ENCODE measurements at regions of chr4 and their contacts with region 1.

Region 1: GRCh38 chr4:163748449-163748848 is 254.0 kb downstream of the TMA16 start:
- DNase-seq: no peak
- ATAC-seq: no peak
- H3K4me3 Mint-ChIP-seq: no peak overlapping the region
- H3K27ac Mint-ChIP-seq: no peak overlapping the region
- H3K4me1 Mint-ChIP-seq: peaks cover 4% of the 10 kb centered on the region
- H3K27me3 Mint-ChIP-seq: no peaks in the 10 kb centered on the region
- CTCF ChIP-seq: no peak

Region 2: GRCh38 chr4:163694385-163694784 is 54.1 kb before region 1 on chr4:
- CTCF ChIA-PET with region 1: no interaction called
- POLR2A ChIA-PET with region 1: no interaction called
- intact Hi-C with region 1: loop called (anchors 2 kb)
- DNase-seq: no peak
- ATAC-seq: no peak
- H3K4me3 Mint-ChIP-seq: no peak overlapping the region
- H3K27ac Mint-ChIP-seq: no peak overlapping the region
- H3K4me1 Mint-ChIP-seq: no peaks in the 10 kb centered on the region
- H3K27me3 Mint-ChIP-seq: peaks cover 3% of the 10 kb centered on the region
- CTCF ChIP-seq: no peak

Region 3: DNA sequence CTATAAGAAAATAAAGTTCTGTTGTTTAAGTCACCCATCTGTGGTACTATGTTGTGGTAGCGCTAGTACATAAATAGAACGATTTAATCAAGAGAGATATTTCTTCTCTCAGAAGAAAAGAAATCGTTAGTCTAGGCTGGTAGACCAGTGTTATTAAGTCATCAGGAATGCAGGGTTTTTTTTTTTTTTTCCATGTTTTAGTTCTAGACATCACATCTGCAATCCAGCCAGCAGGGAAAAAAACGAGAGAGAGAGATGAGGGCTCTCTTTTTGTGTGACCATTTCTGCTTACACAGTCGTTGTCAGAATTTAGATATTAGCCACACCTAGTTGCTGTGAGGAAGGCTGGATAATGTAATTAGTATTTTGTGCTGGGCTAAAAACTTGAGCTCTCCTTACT is 163.4 kb after region 1 on chr4:
- CTCF ChIA-PET with region 1: no interaction called
- POLR2A ChIA-PET with region 1: interaction called, 10 read pairs
- intact Hi-C with region 1: no loop called
- DNase-seq: no peak
- ATAC-seq: no peak
- H3K4me3 Mint-ChIP-seq: no peak overlapping the region
- H3K27ac Mint-ChIP-seq: no peak overlapping the region
- H3K4me1 Mint-ChIP-seq: no peaks in the 10 kb centered on the region
- H3K27me3 Mint-ChIP-seq: no peaks in the 10 kb centered on the region
- CTCF ChIP-seq: no peak